ENCODE measurements at regions of chr17 and their contacts with region 1.

Region 1: DNA sequence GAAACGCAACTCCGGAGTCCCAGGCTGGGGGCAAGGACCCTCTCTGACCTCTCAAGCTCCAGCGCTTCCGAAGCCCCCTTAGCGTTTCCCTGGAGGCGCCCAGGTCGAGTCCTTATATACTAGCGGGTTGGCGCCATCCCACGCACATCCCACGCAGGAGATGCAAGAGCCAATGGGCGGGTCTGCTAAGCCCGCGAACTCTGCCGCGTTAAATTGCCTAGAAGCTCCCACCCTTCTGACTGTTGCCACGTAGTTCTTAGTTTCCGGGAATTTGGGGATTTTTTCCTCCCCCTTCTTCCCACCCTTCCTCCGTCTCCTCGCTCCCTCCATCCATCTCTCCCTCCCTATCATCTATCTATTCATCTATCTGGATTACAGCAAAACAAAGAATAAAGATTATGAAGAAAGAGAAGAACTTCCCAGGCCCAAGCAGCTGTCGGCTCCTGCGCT is at the start of gene SLFN11:
- DNase-seq: peak; percentile 63 to 88
- ATAC-seq: peak; percentile 83 to 89
- H3K4me3 ChIP-seq: peak within 1 kb of the TSS; percentile 53
- H3K27ac ChIP-seq: peak within 1 kb of the TSS; percentile 60 to 74
- H3K4me1 ChIP-seq: peaks cover 11% of the 10 kb centered on the region; the same call in 2 of the 3 replicates
- CTCF ChIP-seq: no peak
- EP300 ChIP-seq: no peak
- POLR2A ChIP-seq: peak; percentile 46
- RAD21 ChIP-seq: no peak
- polyA plus RNA-seq, gene SLFN11: 24.0 and 27.2 TPM in 2 replicates

Region 2: DNA sequence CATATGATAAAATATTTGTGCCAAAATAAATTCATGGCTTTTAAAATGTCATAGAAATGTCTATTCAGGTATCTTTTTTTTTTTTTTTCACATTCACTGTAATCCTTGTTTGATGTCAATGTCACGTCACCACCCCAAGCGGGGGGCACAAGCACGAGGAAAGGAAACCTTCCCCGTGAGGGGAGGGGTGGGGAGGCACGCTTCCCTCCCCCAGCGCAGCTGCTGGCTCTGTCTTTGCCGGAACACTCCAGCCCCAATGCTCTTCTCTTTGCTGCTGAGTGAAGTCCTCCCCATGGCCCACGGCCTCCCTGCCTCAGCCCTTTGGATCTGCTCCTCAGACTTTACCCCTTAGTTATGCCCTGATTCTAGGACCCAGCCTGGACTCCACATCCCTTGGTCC is 180.9 kb before region 1 on chr17:
- CTCF ChIA-PET with region 1: no interaction called
- POLR2A ChIA-PET with region 1: no interaction called
- DNase-seq: no peak
- ATAC-seq: peak in 1 of 2 experiments; percentile 43; a peak in 1 of 6 replicates
- H3K4me3 ChIP-seq: no peak overlapping the region
- H3K27ac ChIP-seq: no peak overlapping the region
- H3K4me1 ChIP-seq: no peaks in the 10 kb centered on the region
- CTCF ChIP-seq: no peak
- EP300 ChIP-seq: no peak
- POLR2A ChIP-seq: no peak
- RAD21 ChIP-seq: no peak

Region 3: DNA sequence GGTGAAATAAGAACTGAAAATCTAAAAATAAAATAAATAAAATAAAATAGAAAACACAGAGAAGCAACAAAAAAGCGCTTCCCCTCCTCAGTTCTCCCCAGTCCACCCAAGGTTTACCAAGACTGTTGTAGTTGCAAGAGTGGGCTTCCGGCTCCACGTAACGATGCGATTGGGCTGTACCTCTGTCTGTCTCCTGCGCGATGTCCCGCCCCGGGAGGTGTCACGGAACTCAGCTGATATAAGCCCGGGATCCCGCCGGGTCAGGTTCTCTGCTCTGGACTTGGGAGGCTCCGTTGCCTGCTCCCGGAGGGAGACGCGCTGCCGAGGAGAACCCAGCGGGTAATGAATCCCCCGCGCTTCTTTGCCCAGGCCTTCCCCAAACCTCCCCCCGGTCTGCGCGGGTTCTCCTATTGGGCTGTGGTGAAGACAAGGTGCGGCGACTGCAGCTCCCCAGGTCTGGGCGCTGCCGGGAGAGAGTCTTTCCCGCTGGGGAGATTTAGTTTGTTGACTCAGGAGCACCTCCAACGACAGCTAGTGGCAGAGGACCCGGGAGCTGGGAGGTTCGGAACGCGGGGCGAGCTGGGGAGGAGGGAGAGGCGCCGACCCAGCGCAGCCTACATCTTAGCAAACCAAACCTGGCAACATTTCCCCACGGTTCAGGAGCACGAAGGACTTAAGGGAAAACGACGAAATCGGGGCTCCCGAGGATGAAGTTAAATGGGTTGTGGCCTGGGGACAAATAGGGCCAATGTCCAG is 130.6 kb before region 1 on chr17 and contains the start of gene SLFN5:
- CTCF ChIA-PET with region 1: no interaction called
- POLR2A ChIA-PET with region 1: interaction called, 16 read pairs
- DNase-seq: peak; percentile 91 to 98
- ATAC-seq: peak; percentile 83 to 96
- H3K4me3 ChIP-seq: peak within 1 kb of the TSS; percentile 82
- H3K27ac ChIP-seq: peak within 1 kb of the TSS; percentile 88
- H3K4me1 ChIP-seq: peaks cover 40% of the 10 kb centered on the region
- CTCF ChIP-seq: no peak
- EP300 ChIP-seq: no peak
- POLR2A ChIP-seq: peak; percentile 91
- RAD21 ChIP-seq: no peak; a peak in 2 of 5 replicates
- polyA plus RNA-seq, gene SLFN5: 30.3 and 33.1 TPM in 2 replicates

Region 4: DNA sequence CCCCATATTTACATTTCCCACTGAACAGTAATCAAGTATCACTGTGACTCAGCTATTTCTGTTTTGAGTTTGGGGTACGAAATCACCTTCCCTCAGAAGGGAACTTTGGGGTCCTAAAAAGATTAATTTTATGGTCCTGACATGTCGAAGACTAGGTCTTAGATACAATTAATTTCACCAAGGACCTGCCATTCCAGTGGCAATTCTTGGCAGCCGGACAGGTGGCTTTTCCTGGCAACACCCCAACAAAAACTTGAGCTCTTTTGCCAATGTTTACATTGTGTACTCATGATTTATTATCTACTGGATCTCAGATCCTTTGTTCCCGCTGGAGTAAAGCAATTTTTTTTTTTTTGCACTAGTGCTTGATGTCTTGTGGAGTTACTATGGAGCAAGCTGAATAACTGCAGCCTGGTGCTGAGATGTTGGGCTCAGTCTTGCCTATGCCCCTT is 116.3 kb before region 1 on chr17:
- CTCF ChIA-PET with region 1: no interaction called
- POLR2A ChIA-PET with region 1: interaction called, 12 read pairs
- DNase-seq: peak; percentile 51 to 89
- ATAC-seq: peak; percentile 51 to 70
- H3K4me3 ChIP-seq: no peak overlapping the region
- H3K27ac ChIP-seq: peak overlapping the region; percentile 66 to 76
- H3K4me1 ChIP-seq: peaks cover 45% of the 10 kb centered on the region
- CTCF ChIP-seq: no peak
- EP300 ChIP-seq: peak; percentile 45 to 59; a peak in 1 of 5 replicates
- POLR2A ChIP-seq: no peak
- RAD21 ChIP-seq: peak; percentile 12 to 23; a peak in 1 of 5 replicates

Region 5: DNA sequence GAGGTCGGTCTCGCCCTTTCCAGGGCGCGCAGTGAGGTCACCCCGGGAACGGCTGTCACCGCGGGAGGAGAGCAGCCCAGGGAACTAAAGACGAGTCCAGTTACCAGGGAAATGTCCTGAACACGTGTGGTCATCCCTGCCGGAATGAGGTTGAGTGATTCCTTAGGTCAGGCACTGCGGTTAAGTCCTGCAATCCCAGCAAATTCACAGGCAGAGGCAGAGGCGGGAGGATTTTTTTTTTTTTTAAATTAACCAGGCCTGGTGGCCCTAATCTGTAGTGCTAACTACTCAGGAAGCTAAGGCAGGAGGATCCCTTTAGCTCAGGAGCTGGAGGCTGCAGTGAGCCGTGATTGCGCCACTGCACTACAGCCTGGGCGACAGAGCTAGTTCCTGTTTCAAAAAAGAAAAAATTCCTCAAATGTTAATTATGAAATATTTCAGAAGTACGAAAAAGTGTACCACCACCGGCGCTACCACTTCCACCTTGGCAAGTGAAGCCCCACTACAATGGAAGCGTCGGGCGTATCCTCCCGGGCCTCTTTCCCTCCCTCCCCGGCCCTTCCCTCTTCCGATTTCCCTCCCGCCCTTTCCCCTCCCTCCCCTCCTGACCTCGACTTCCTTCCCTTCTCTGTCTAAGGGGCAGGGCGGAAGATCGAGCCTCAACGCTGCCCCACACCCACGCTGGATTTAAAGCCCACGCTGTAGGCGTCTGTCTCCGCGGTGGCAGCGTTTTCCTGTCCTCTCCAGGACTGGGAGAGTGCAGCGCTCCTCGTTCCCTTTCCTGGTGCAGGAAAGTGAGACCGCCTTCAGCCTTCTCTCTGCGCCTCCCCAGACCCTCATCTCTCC is 27.4 kb before region 1 on chr17:
- CTCF ChIA-PET with region 1: no interaction called
- POLR2A ChIA-PET with region 1: no interaction called
- DNase-seq: no peak
- ATAC-seq: peak; percentile 24 to 51; a peak in 2 of 6 replicates
- H3K4me3 ChIP-seq: no peak overlapping the region
- H3K27ac ChIP-seq: no peak overlapping the region
- H3K4me1 ChIP-seq: no peaks in the 10 kb centered on the region
- CTCF ChIP-seq: no peak
- EP300 ChIP-seq: no peak
- POLR2A ChIP-seq: no peak
- RAD21 ChIP-seq: no peak

Region 6: DNA sequence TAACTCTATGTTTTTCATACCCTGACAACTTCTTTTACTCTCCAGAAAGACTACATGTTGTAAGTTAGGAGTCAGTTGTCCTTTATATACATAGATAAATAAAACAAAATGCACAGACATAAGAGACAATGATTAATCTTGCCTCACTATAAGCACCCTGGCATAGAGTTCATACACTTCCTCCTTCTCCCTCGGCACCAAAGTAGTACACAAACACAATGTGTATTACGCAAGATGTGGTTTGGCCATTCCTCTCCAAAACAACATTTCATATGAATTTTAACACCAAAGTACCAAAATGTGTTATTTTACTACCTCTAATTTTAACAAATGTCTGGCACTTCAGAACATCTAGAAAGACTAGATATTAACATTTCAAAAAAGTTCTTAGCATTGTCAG is 17.1 kb after region 1 on chr17:
- CTCF ChIA-PET with region 1: no interaction called
- POLR2A ChIA-PET with region 1: no interaction called
- DNase-seq: no peak
- ATAC-seq: no peak
- H3K4me3 ChIP-seq: no peak overlapping the region
- H3K27ac ChIP-seq: no peak overlapping the region
- H3K4me1 ChIP-seq: no peaks in the 10 kb centered on the region
- CTCF ChIP-seq: no peak
- EP300 ChIP-seq: no peak
- POLR2A ChIP-seq: no peak
- RAD21 ChIP-seq: no peak

Measured in A549 (cell line).